ENCODE measurements at regions of chr16 and their contacts with region 1.

Region 1: GRCh38 chr16:20300312-20301097 is 26.8 kb downstream of the GP2 start:
- DNase-seq: peak; percentile 71
- ATAC-seq: peak; percentile 98
- H3K4me3 ChIP-seq: no peak overlapping the region
- H3K27ac ChIP-seq: no peak overlapping the region
- H3K4me1 ChIP-seq: no peaks in the 10 kb centered on the region
- H3K27me3 ChIP-seq: no peaks in the 10 kb centered on the region
- CTCF ChIP-seq: peak; percentile 97
- EP300 ChIP-seq: no peak
- POLR2A ChIP-seq: no peak
- RAD21 ChIP-seq: peak; percentile 94

Region 2: GRCh38 chr16:19583665-19584300 is 716.7 kb before region 1 on chr16:
- CTCF ChIA-PET with region 1: no interaction called
- POLR2A ChIA-PET with region 1: no interaction called
- in situ Hi-C with region 1: loop called (anchors 25 kb)
- intact Hi-C with region 1: no loop called
- DNase-seq: peak; percentile 77
- ATAC-seq: peak; percentile 98
- H3K4me3 ChIP-seq: no peak overlapping the region
- H3K27ac ChIP-seq: no peak overlapping the region
- H3K4me1 ChIP-seq: 0 out of 2 replicates have a peak, but pooled peaks cover 6% of the 10 kb centered on the region
- H3K27me3 ChIP-seq: no peaks in the 10 kb centered on the region
- CTCF ChIP-seq: peak; percentile 90
- EP300 ChIP-seq: no peak
- POLR2A ChIP-seq: no peak
- RAD21 ChIP-seq: no peak

Region 3: DNA sequence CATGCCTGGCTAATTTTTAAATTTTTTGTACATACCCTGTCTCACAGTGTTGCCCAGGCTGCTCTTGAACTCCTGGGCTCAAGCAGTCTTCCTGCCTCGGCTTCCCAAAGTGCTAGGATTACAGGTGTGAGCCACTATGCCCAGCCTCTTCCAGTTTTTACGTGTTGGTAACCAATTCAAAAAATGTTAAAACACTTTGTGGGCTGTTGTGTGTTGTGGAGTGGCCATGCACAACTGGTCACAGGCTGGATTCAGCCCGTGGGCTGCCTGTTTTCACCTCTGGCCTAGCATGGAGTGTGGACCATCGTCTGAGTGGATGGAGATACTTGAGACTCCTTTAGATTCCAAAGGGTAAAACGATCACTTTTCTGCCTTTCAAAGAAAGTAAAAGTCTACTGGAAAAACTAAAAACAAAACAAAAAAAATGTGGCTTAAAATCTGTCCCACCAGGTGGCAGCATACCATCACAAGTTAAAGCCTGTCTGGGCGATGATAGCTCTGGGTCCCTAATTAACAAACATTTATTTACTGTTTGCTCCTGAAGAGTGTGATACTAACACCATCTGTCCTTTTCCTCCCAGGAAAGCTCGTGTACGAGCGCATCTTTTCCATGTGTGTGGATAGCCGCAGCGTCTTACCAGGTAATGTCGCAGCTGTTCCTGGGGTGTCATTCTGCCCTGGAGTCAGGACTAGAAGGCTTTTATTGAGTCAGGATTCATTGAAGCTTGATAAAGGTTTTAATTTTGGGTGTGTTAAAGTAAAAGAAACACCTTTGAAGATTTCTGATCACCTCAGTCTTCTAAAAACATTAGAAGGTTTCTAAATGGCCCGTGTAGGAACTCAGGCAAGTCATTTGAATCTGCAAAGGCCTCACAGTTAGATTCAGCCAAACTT is 699.2 kb before region 1 on chr16:
- CTCF ChIA-PET with region 1: interaction called, 4 read pairs
- POLR2A ChIA-PET with region 1: no interaction called
- in situ Hi-C with region 1: loop called (anchors 25 kb)
- intact Hi-C with region 1: loop called (anchors 10 kb)
- DNase-seq: peak; percentile 47
- ATAC-seq: peak; percentile 48
- H3K4me3 ChIP-seq: no peak overlapping the region
- H3K27ac ChIP-seq: no peak overlapping the region
- H3K4me1 ChIP-seq: peaks cover 9% of the 10 kb centered on the region
- H3K27me3 ChIP-seq: no peaks in the 10 kb centered on the region
- CTCF ChIP-seq: peak; percentile 89
- EP300 ChIP-seq: no peak
- POLR2A ChIP-seq: no peak
- RAD21 ChIP-seq: peak; percentile 91

Region 4: DNA sequence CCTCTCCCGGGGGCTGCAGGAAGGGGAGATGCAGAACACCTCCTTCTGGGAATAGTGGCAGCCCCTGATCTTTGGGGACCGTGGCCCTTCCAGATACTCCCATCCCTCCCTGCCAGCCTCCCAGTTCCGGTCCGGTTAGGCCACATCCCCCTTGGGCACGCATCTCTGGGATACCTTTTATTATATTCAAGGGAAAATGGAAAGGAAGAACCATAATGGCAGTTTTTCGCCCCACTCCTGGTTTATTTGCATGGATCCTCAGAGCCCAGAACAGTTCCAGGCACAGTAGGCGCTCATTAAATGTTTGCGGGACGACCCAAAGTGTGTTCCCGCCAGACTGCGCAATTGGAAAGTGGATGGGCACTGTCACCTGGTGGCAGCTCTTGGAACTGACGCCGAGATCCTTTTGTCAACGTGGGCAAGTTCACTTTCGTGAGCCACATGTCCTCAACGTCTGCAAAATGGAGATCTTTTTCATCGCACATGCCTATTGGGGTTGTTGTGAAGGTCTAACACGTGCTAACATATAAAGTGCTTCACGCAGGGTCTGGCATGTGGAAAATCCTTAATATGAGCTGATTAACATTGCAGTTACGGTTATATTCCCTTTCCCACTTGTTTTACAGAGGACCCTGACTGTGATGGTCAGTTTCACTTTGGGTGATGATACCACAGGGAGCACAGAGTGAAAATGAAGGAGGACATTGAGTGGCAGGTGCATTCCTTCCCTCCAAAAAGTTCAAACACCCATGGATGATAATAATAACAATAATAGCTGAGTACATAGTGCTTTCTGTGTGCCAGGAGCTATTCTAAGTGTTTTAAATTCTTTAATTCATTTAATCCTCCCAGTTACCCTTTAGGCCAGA is 414.2 kb before region 1 on chr16:
- CTCF ChIA-PET with region 1: no interaction called
- POLR2A ChIA-PET with region 1: no interaction called
- in situ Hi-C with region 1: no loop called
- intact Hi-C with region 1: no loop called
- DNase-seq: peak; percentile 76
- ATAC-seq: peak; percentile 63
- H3K4me3 ChIP-seq: peak overlapping the region in 1 of 3 experiments; percentile 39; a peak in 1 of 6 replicates
- H3K27ac ChIP-seq: no peak overlapping the region
- H3K4me1 ChIP-seq: peaks cover 25% of the 10 kb centered on the region
- H3K27me3 ChIP-seq: peaks cover 11 to 39% of the 10 kb centered on the region in 2 experiments
- CTCF ChIP-seq: peak; percentile 100
- EP300 ChIP-seq: peak in 1 of 2 experiments; percentile 15; a peak in 1 of 4 replicates
- POLR2A ChIP-seq: no peak
- RAD21 ChIP-seq: peak; percentile 99

Region 5: GRCh38 chr16:19898924-19899604 is 401.4 kb before region 1 on chr16:
- CTCF ChIA-PET with region 1: interaction called, 10 read pairs
- POLR2A ChIA-PET with region 1: no interaction called
- in situ Hi-C with region 1: no loop called
- intact Hi-C with region 1: no loop called
- DNase-seq: peak; percentile 66
- ATAC-seq: peak; percentile 80
- H3K4me3 ChIP-seq: no peak overlapping the region
- H3K27ac ChIP-seq: no peak overlapping the region
- H3K4me1 ChIP-seq: no peaks in the 10 kb centered on the region
- H3K27me3 ChIP-seq: peaks cover 0 to 6% of the 10 kb centered on the region in 2 experiments; a peak in 3 of 5 replicates
- CTCF ChIP-seq: peak; percentile 86
- EP300 ChIP-seq: no peak
- POLR2A ChIP-seq: no peak
- RAD21 ChIP-seq: peak; percentile 90

Region 6: GRCh38 chr16:19907161-19907992 is 393.1 kb before region 1 on chr16:
- CTCF ChIA-PET with region 1: interaction called, 71 read pairs
- POLR2A ChIA-PET with region 1: interaction called, 6 read pairs
- in situ Hi-C with region 1: loop called (anchors 5 kb)
- intact Hi-C with region 1: loop called (anchors 1 kb)
- DNase-seq: peak; percentile 67
- ATAC-seq: peak; percentile 97
- H3K4me3 ChIP-seq: no peak overlapping the region
- H3K27ac ChIP-seq: no peak overlapping the region
- H3K4me1 ChIP-seq: no peaks in the 10 kb centered on the region
- H3K27me3 ChIP-seq: peaks cover 3 to 30% of the 10 kb centered on the region in 2 experiments; a peak in 4 of 5 replicates
- CTCF ChIP-seq: peak; percentile 99
- EP300 ChIP-seq: no peak
- POLR2A ChIP-seq: no peak
- RAD21 ChIP-seq: peak; percentile 99

Region 7: DNA sequence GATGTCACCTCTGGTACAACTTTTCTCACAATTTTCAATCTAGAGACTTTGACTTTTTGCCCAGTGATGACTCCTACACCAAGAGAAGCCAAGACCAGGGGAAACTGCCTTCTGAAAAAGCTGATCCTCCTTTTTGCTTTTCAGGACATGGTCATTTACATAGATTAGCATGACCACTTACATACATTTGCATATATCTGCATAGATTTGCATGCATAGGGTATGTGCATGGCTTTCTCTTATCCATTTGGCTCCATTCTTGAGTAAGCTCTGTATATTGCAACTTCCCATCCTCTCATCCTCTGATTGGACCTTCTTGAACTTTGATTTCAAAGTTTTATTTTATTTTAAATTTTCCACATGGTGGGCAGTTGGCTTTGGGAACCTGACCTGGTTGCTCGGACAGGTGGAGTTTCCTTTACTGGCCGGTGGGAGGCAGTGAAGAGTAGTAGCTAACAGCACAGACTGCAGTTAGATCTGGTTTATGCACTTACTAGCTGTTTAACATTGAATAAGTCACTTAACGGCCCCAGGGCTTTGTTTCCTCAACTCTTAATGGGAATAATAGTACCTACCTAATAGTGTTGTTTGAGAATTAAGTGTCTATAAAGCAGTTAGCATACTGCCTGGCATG is 319.8 kb before region 1 on chr16:
- CTCF ChIA-PET with region 1: interaction called, 5 read pairs
- POLR2A ChIA-PET with region 1: no interaction called
- in situ Hi-C with region 1: no loop called
- intact Hi-C with region 1: loop called (anchors 1 kb)
- DNase-seq: peak; percentile 34
- ATAC-seq: peak; percentile 76
- H3K4me3 ChIP-seq: no peak overlapping the region
- H3K27ac ChIP-seq: no peak overlapping the region
- H3K4me1 ChIP-seq: no peaks in the 10 kb centered on the region
- H3K27me3 ChIP-seq: peaks cover 0 to 11% of the 10 kb centered on the region in 2 experiments; a peak in 2 of 5 replicates
- CTCF ChIP-seq: peak; percentile 62
- EP300 ChIP-seq: no peak
- POLR2A ChIP-seq: no peak
- RAD21 ChIP-seq: peak; percentile 29; the same call in 1 of the 2 replicates

Region 8: GRCh38 chr16:20327444-20328041 is 27.0 kb after region 1 on chr16 and contains the start of gene GP2:
- CTCF ChIA-PET with region 1: no interaction called
- POLR2A ChIA-PET with region 1: no interaction called
- in situ Hi-C with region 1: no loop called
- intact Hi-C with region 1: no loop called
- DNase-seq: peak; percentile 45
- ATAC-seq: peak; percentile 83
- H3K4me3 ChIP-seq: no peak within 1 kb of the TSS
- H3K27ac ChIP-seq: no peak within 1 kb of the TSS
- H3K4me1 ChIP-seq: peaks cover 27% of the 10 kb centered on the region
- H3K27me3 ChIP-seq: no peaks in the 10 kb centered on the region
- CTCF ChIP-seq: no peak
- EP300 ChIP-seq: peak in 1 of 2 experiments; percentile 78; a peak in 2 of 4 replicates
- POLR2A ChIP-seq: no peak
- RAD21 ChIP-seq: no peak
- total RNA-seq, gene GP2: 0.69 and 0.88 TPM in 2 replicates

Measured in HepG2 (cell line).